K562 (cell line): ENCODE measurements at regions of chr6 and their contacts with region 1.

Region 1: DNA sequence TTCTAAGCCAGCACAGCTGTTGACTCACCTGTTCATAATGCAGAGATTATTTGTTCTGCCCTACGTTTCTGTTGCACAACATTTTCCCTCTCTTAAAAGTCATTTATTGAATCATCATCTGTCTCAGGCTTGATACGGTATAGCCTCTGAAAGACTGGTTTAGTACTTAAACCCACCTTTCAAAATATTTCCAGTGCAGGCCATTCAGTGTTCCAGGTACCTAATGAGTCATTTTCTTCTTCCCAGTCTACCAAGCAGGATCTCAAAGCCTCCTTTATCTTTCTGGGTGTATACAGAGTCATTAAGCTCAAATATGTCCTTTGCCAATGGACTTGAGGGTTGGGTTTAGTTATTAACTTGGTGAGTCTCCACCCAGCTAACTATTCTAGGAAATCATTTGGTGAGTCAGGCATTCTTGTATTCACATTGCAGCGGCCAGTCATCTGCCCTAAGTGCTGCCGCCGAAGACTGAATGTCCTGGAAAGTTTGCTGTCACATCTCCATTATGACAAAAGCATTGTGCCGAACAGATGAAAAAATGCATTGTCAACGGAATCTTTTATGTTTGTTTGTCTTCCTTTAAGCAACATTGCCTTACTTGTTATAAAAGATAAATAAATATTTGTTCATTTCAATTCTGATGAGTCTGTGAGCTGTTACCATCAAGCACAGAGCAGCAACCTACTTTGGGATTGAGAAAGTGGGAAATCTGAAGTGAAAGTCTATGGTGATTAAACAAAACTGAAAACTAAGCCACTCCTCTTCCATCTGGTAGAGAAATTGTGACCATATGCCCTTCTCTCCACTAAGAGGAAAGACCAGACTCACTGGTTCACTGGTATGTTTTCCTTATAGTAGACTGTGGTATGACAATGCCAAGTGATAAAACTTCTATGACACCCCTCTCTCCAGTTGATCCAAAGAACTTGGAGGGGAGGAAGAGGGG is 14.3 kb upstream of the FAM135A start:
- DNase-seq: peak; percentile 23 to 78 (median 38)
- ATAC-seq: peak; percentile 50
- H3K4me3 ChIP-seq: peak overlapping the region; percentile 58
- H3K27ac ChIP-seq: peak overlapping the region; percentile 70
- H3K4me1 ChIP-seq: peaks cover 1 to 12% of the 10 kb centered on the region in 2 experiments; a peak in 4 of 5 replicates
- H3K27me3 ChIP-seq: no peaks in the 10 kb centered on the region
- CTCF ChIP-seq: no peak
- EP300 ChIP-seq: no peak; the same call in 1 of the 2 replicates
- POLR2A ChIP-seq: no peak
- RAD21 ChIP-seq: no peak

Region 2: DNA sequence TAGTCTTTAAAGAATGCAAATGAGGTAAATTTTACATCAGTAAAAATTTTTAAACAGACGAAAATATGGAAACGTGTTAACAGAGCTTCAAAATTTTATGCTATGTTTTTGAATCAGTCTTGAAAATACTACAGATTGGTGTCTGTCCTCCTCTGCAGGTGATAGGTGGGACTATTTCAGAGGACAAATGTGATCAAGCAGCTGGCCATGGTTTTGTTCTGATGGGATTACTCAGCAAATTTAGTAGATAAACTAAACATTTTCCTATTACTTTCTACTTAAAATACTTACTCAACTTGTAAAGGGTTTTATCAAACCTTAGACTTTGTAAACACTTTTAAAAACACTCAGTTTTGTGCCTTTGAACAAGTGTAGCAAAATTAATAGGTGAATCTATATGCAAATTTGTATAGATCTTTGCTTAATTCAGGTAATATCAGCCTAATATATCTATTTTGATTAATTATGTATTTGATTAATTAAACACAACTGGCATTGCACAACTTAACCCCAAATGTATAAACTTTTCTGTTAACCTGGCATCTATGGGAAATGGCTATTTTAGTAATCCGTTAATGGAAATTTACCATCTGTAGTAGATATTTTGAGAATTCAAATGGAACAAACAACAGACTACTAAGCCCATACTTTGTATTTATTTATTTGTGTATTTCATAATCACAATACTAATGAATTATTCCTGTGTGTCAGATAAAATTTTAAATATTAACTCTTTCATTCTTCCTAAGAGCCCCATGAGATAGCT is 1741.5 kb before region 1 on chr6:
- CTCF ChIA-PET with region 1: no interaction called
- POLR2A ChIA-PET with region 1: no interaction called
- in situ Hi-C with region 1: no loop called
- intact Hi-C with region 1: loop called (anchors 5 kb)
- DNase-seq: peak in 2 of 4 experiments; percentile 37 to 69
- ATAC-seq: peak; percentile 56
- H3K4me3 ChIP-seq: no peak overlapping the region
- H3K27ac ChIP-seq: peak overlapping the region; percentile 88; the same call in 2 of the 3 replicates
- H3K4me1 ChIP-seq: peaks cover 0 to 14% of the 10 kb centered on the region in 2 experiments; a peak in 3 of 5 replicates
- H3K27me3 ChIP-seq: no peaks in the 10 kb centered on the region
- CTCF ChIP-seq: peak in 2 of 3 experiments; percentile 28 to 43; a peak in 2 of 6 replicates
- EP300 ChIP-seq: no peak
- POLR2A ChIP-seq: no peak
- RAD21 ChIP-seq: no peak

Region 3: DNA sequence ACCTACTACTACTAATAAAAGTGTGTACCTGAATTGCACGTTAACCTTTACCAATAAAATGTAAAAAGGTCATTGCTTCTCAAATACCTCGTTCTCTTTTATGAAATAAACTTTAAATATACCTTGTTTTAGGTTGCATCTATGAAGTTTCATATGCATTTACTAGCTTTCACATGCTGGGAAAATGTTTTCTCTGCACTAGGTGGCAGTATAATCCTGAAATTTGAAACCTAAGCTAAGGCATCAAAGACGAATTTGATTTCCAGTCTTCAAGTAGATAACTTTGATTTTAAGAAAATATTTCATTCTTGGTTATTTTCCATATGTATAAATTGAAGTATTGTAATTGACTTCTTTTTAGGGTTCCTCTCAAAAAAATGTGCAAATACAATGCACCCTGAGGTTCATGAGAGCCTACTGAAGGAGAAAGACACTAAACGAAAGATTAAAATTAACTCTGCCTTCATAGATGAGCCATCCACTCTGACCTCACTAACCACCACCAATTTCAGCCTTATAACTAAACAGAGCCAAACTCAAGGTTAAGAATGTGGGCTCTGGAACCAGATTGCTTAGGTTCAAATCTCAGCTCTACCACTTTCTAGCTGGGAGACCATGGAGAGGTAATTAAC is 88.9 kb before region 1 on chr6:
- CTCF ChIA-PET with region 1: no interaction called
- POLR2A ChIA-PET with region 1: interaction called, 10 read pairs
- in situ Hi-C with region 1: no loop called
- intact Hi-C with region 1: no loop called
- DNase-seq: peak in 3 of 4 experiments; percentile 14 to 66 (median 20)
- ATAC-seq: peak; percentile 73
- H3K4me3 ChIP-seq: no peak overlapping the region
- H3K27ac ChIP-seq: no peak overlapping the region
- H3K4me1 ChIP-seq: no peaks in the 10 kb centered on the region; a peak in 1 of 5 replicates
- H3K27me3 ChIP-seq: peaks cover 0 to 8% of the 10 kb centered on the region in 2 experiments; a peak in 2 of 5 replicates
- CTCF ChIP-seq: peak; percentile 54 to 90 (median 70); a peak in 5 of 6 replicates
- EP300 ChIP-seq: no peak
- POLR2A ChIP-seq: no peak
- RAD21 ChIP-seq: peak; percentile 93 to 97

Region 4: DNA sequence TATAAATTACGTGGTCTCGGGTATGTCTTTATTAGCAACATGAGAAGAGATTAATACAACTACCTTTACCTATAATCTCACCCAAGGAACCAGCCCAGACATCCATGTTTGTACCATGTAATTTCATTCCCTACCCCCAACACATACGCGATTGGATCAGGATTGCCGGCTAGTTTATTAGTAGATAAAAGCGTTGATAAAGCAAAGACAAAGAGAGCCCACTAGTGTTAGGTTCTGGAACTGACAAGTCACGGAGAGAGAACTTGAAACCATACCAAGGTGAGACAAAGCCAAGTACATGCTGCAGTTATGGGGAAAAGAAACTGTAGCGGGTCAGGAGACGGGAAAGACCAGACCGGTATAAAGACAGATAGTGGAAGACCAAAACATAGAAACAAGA is 23.2 kb before region 1 on chr6:
- CTCF ChIA-PET with region 1: no interaction called
- POLR2A ChIA-PET with region 1: interaction called, 11 read pairs
- in situ Hi-C with region 1: no loop called
- intact Hi-C with region 1: loop called (anchors 2 kb)
- DNase-seq: peak; percentile 26 to 60 (median 36)
- ATAC-seq: peak; percentile 74
- H3K4me3 ChIP-seq: no peak overlapping the region
- H3K27ac ChIP-seq: no peak overlapping the region
- H3K4me1 ChIP-seq: peaks cover 0 to 16% of the 10 kb centered on the region in 2 experiments; a peak in 4 of 5 replicates
- H3K27me3 ChIP-seq: no peaks in the 10 kb centered on the region
- CTCF ChIP-seq: peak; percentile 51 to 65 (median 56)
- EP300 ChIP-seq: peak; percentile 3; the same call in 1 of the 2 replicates
- POLR2A ChIP-seq: no peak
- RAD21 ChIP-seq: peak in 1 of 2 experiments; percentile 41; a peak in 3 of 4 replicates

Region 5: GRCh38 chr6:70413114-70413991 is 14.3 kb after region 1 on chr6 and contains the start of gene FAM135A:
- CTCF ChIA-PET with region 1: no interaction called
- POLR2A ChIA-PET with region 1: interaction called, 23 read pairs
- in situ Hi-C with region 1: no loop called
- intact Hi-C with region 1: loop called (anchors 2 kb)
- DNase-seq: peak; percentile 98 to 99 (median 99)
- ATAC-seq: peak; percentile 93
- H3K4me3 ChIP-seq: peak within 1 kb of the TSS; percentile 83
- H3K27ac ChIP-seq: peak within 1 kb of the TSS; percentile 83
- H3K4me1 ChIP-seq: peaks cover 3 to 6% of the 10 kb centered on the region in 2 experiments; a peak in 2 of 5 replicates
- H3K27me3 ChIP-seq: no peaks in the 10 kb centered on the region
- CTCF ChIP-seq: no peak; a peak in 1 of 6 replicates
- EP300 ChIP-seq: no peak
- POLR2A ChIP-seq: peak; percentile 98
- RAD21 ChIP-seq: no peak
- polyA plus RNA-seq, gene FAM135A: 7.4 to 8.4 TPM

Region 6: GRCh38 chr6:70566751-70567382 is 167.8 kb after region 1 on chr6 and contains the start of gene SDHAF4:
- CTCF ChIA-PET with region 1: no interaction called
- POLR2A ChIA-PET with region 1: no interaction called
- in situ Hi-C with region 1: no loop called
- intact Hi-C with region 1: loop called (anchors 10 kb)
- DNase-seq: peak; percentile 96 to 99 (median 98)
- ATAC-seq: peak; percentile 99
- H3K4me3 ChIP-seq: peak within 1 kb of the TSS; percentile 73
- H3K27ac ChIP-seq: peak within 1 kb of the TSS; percentile 90
- H3K4me1 ChIP-seq: peaks cover 10 to 15% of the 10 kb centered on the region in 2 experiments; a peak in 3 of 5 replicates
- H3K27me3 ChIP-seq: no peaks in the 10 kb centered on the region
- CTCF ChIP-seq: 0 out of 6 replicates have a peak, but pooled peaks of 1 of the 3 experiments have one; percentile 1
- EP300 ChIP-seq: no peak
- POLR2A ChIP-seq: peak; percentile 95
- RAD21 ChIP-seq: no peak
- polyA plus RNA-seq, gene SDHAF4: 4.9 to 5.1 TPM

Region 7: GRCh38 chr6:70667711-70668498 is 268.8 kb after region 1 on chr6 and contains the start of gene SMAP1:
- CTCF ChIA-PET with region 1: no interaction called
- POLR2A ChIA-PET with region 1: no interaction called
- in situ Hi-C with region 1: no loop called
- intact Hi-C with region 1: loop called (anchors 10 kb)
- DNase-seq: peak; percentile 94 to 99 (median 98)
- ATAC-seq: peak; percentile 96
- H3K4me3 ChIP-seq: peak within 1 kb of the TSS; percentile 83
- H3K27ac ChIP-seq: peak within 1 kb of the TSS; percentile 83
- H3K4me1 ChIP-seq: peaks cover 12 to 17% of the 10 kb centered on the region in 2 experiments; a peak in 3 of 5 replicates
- H3K27me3 ChIP-seq: 0 out of 5 replicates have a peak, but pooled peaks cover 0 to 8% of the 10 kb centered on the region in 2 experiments
- CTCF ChIP-seq: 0 out of 6 replicates have a peak, but pooled peaks of 1 of the 3 experiments have one; percentile 4
- EP300 ChIP-seq: no peak
- POLR2A ChIP-seq: peak; percentile 76
- RAD21 ChIP-seq: no peak
- polyA plus RNA-seq, gene SMAP1: 11.4 to 11.7 TPM

Region 8: GRCh38 chr6:70706491-70707123 is 307.6 kb after region 1 on chr6:
- CTCF ChIA-PET with region 1: no interaction called
- POLR2A ChIA-PET with region 1: no interaction called
- in situ Hi-C with region 1: no loop called
- intact Hi-C with region 1: no loop called
- DNase-seq: peak in 3 of 4 experiments; percentile 10 to 49 (median 13)
- ATAC-seq: no peak
- H3K4me3 ChIP-seq: no peak overlapping the region
- H3K27ac ChIP-seq: no peak overlapping the region
- H3K4me1 ChIP-seq: no peaks in the 10 kb centered on the region
- H3K27me3 ChIP-seq: no peaks in the 10 kb centered on the region
- CTCF ChIP-seq: peak in 2 of 3 experiments; percentile 42 to 74; a peak in 3 of 6 replicates
- EP300 ChIP-seq: no peak
- POLR2A ChIP-seq: no peak
- RAD21 ChIP-seq: peak; percentile 64 to 78